ENCODE measurements at regions of chr7 and their contacts with region 1.

Region 1: DNA sequence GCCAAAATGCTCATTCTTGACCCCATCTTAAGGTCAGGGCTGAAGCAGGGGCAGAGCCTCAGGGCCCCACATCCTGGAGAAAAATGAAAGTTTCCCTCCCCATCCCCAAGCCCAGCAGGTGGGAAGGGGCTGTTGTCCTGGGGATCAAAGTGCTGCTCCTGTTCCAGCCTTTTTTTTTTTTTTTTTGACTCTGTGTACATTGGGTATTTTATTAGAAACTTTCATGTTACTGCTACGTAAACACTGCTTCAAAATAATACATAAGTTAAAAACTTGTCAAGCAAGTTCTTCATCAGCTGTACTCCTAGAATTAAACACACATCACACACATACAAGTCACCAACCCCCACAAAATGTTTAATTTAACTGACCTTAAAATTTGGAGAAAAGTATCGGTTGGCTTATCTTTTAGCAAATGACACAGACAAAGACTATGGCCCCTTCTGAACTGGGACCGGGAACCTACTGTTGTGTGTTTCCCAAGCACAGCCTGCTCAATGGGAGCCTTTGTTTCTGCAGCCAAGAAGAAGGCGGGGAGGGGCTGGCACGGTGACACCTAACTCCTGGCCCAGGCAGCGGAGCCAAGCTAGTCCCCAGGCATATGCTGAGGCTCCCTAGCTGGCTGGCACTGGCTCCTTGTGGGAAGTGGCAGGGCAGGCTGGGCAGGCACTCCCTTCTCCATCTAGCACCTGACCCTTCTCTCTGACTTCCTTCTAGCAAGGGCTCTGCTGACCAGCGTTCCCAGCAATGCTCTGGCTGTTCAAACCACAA is 325.2 kb downstream of the PLXNA4 start:
- DNase-seq: peak; percentile 89 to 92 (median 89)
- ATAC-seq: peak; percentile 94
- H3K4me3 ChIP-seq: no peak overlapping the region
- H3K4me1 ChIP-seq: peaks cover 16% of the 10 kb centered on the region
- CTCF ChIP-seq: no peak

Region 2: GRCh38 chr7:131948434-131949053 is 302.5 kb before region 1 on chr7:
- intact Hi-C with region 1: loop called in 1 of 2 experiments (anchors 2 kb)
- DNase-seq: peak in 2 of 3 donors; percentile 57 to 72
- ATAC-seq: peak; percentile 84
- H3K4me3 ChIP-seq: no peak overlapping the region
- H3K4me1 ChIP-seq: peaks cover 20% of the 10 kb centered on the region
- CTCF ChIP-seq: no peak

Region 3: DNA sequence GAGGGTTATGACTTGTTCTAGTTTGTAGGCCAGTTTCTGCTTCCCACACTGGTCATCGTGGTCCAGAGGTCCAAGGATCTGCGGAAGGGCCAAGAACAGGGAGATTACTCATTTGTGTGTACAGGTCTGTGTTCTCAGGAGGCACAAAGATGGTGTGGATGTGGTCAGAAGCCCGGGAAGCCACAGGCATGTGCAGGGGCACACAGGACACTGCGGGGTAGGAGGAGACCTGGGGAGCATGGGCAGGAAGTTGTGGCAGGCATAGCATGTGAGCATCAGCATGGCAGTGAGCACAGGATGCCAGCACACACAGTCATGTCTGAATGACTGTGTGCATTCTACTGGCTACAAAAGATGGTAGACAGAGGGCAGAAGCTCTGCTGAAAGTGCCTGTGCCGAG is 120.6 kb before region 1 on chr7:
- intact Hi-C with region 1: no loop called
- DNase-seq: no peak
- ATAC-seq: no peak
- H3K4me3 ChIP-seq: no peak overlapping the region
- H3K4me1 ChIP-seq: no peaks in the 10 kb centered on the region
- CTCF ChIP-seq: no peak